Sigmoid colon (tissue), 7 donors: ENCODE measurements at regions of chr13 and their contacts with region 1.

Region 1: GRCh38 chr13:91348906-91349435 is 1.5 kb downstream of the MIR17HG start:
- DNase-seq: peak; percentile 92
- H3K4me3 ChIP-seq: peak overlapping the region; percentile 52 to 94 (median 92)
- H3K27ac ChIP-seq: peak overlapping the region; percentile 89 to 96 (median 94)
- H3K4me1 ChIP-seq: peaks cover 0 to 29% (median 23%) of the 10 kb centered on the region in 4 donors
- H3K27me3 ChIP-seq: no peaks in the 10 kb centered on the region
- CTCF ChIP-seq: peak; percentile 71 to 95 (median 79)
- EP300 ChIP-seq: no peak
- POLR2A ChIP-seq: no peak

Region 2: DNA sequence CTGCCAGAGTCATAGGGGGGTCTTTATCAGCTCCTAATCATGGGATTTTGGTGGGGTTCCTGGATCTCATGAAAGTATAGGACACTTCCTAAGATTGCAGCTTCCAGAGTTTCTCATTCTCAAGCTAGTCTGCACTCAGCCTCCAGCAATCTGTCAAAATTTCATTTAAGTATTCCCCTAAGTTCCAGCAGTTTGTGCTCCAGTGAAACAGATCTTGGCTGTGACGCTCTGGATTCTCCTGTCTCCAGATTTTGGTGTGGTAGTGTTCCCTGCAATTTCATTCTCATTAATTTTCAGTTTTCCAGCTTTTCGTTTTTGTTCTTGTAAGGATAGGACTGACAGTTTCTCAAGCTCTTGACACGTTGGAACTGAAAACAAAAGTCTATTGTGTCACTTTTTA is 910.4 kb before region 1 on chr13:
- intact Hi-C with region 1: no loop called
- DNase-seq: no peak
- H3K4me3 ChIP-seq: no peak overlapping the region
- H3K27ac ChIP-seq: no peak overlapping the region
- H3K4me1 ChIP-seq: no peaks in the 10 kb centered on the region
- H3K27me3 ChIP-seq: no peaks in the 10 kb centered on the region
- CTCF ChIP-seq: no peak
- EP300 ChIP-seq: no peak
- POLR2A ChIP-seq: no peak

Region 3: GRCh38 chr13:91133941-91134802 is 214.8 kb before region 1 on chr13:
- intact Hi-C with region 1: no loop called
- DNase-seq: no peak
- H3K4me3 ChIP-seq: no peak overlapping the region
- H3K27ac ChIP-seq: no peak overlapping the region
- H3K4me1 ChIP-seq: no peaks in the 10 kb centered on the region
- H3K27me3 ChIP-seq: no peaks in the 10 kb centered on the region
- CTCF ChIP-seq: peak in 3 of 4 experiments; percentile 35 to 70 (median 57)
- EP300 ChIP-seq: no peak
- POLR2A ChIP-seq: no peak

Region 4: DNA sequence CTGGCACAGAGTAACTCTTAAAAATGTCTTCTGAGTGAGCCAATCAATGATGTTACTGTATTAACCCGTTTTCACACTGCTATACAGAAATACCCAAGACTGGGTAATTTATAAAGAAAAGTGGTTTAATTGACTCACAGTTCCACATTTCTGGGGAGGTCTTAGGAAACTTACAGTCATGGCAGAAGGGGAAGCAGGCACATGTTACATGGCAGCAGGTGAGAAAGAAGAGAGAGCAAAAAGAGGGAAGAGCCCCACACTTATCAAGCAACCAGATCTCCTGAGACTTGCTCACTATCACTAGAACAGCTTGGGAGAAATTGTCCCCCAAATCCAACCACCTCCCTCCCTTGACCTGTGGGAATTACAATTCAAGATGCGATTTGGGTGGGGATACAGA is 99.1 kb before region 1 on chr13:
- intact Hi-C with region 1: no loop called
- DNase-seq: no peak
- H3K4me3 ChIP-seq: no peak overlapping the region
- H3K27ac ChIP-seq: no peak overlapping the region
- H3K4me1 ChIP-seq: no peaks in the 10 kb centered on the region
- H3K27me3 ChIP-seq: no peaks in the 10 kb centered on the region
- CTCF ChIP-seq: no peak
- EP300 ChIP-seq: no peak
- POLR2A ChIP-seq: no peak

Region 5: GRCh38 chr13:91313103-91313502 is 35.9 kb before region 1 on chr13:
- intact Hi-C with region 1: loop called (anchors 1 kb)
- DNase-seq: no peak
- H3K4me3 ChIP-seq: no peak overlapping the region
- H3K27ac ChIP-seq: no peak overlapping the region
- H3K4me1 ChIP-seq: no peaks in the 10 kb centered on the region
- H3K27me3 ChIP-seq: peaks cover 0 to 16% (median 0%) of the 10 kb centered on the region in 3 donors
- CTCF ChIP-seq: peak; percentile 13 to 62 (median 47)
- EP300 ChIP-seq: no peak
- POLR2A ChIP-seq: no peak

Region 6: DNA sequence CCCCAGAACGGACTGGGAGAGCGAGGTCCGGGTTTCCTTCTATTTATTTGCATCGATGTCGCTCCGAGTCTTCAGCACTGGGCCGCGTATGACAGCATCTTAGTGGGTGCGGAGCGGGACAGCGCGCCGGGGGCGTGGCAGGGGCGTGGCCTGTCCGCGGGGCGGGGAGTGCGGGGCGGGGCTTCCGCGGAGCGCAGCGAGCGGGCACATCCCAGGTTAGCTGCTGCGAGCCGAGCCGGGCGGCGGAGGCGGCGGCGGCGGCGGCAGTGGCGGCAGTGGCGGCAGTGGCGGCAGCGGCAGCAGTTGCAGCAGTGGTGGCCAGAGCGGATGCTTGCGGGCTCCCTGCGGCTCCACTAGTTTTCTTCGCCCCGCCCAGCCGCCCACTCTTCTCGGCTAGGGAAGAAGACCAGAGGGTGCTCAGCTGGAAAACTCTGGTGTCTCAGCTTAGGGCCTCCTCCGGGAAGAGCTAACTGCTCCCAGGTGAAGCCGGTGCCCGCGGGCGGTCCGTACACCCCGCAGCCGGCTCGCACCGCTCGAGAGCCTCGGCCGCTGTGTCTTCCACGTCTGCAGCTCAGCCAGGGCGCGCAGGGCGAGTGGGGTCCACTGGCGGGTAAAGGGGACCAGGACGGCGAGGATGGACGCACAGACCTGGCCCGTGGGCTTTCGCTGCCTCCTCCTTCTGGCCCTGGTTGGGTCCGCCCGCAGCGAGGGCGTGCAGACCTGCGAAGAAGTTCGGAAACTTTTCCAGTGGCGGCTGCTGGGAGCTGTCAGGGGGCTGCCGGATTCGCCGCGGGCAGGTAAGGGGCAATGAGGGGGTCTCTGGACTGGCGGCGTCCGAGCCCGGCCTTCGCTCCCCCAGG is 49.7 kb after region 1 on chr13 and contains the start of gene GPC5:
- intact Hi-C with region 1: loop called (anchors 2 kb)
- DNase-seq: peak; percentile 76
- H3K4me3 ChIP-seq: peak within 1 kb of the TSS; percentile 17 to 59 (median 52)
- H3K27ac ChIP-seq: no peak within 1 kb of the TSS
- H3K4me1 ChIP-seq: peaks cover 0 to 15% (median 14%) of the 10 kb centered on the region in 4 donors
- H3K27me3 ChIP-seq: peaks cover 0 to 52% (median 14%) of the 10 kb centered on the region in 3 donors
- CTCF ChIP-seq: no peak
- EP300 ChIP-seq: no peak
- POLR2A ChIP-seq: no peak
- total RNA-seq, gene GPC5: 1.5 to 3.9 (median 2.9) TPM

Region 7: GRCh38 chr13:91618315-91618714 is 269.3 kb after region 1 on chr13:
- intact Hi-C with region 1: no loop called
- DNase-seq: no peak
- H3K4me3 ChIP-seq: no peak overlapping the region
- H3K27ac ChIP-seq: no peak overlapping the region
- H3K4me1 ChIP-seq: no peaks in the 10 kb centered on the region
- H3K27me3 ChIP-seq: no peaks in the 10 kb centered on the region
- CTCF ChIP-seq: no peak
- EP300 ChIP-seq: no peak
- POLR2A ChIP-seq: no peak